Naive thymus-derived CD4-positive, alpha-beta T cell (primary cell): ENCODE measurements at regions of chr3 and their contacts with region 1.

Region 1: DNA sequence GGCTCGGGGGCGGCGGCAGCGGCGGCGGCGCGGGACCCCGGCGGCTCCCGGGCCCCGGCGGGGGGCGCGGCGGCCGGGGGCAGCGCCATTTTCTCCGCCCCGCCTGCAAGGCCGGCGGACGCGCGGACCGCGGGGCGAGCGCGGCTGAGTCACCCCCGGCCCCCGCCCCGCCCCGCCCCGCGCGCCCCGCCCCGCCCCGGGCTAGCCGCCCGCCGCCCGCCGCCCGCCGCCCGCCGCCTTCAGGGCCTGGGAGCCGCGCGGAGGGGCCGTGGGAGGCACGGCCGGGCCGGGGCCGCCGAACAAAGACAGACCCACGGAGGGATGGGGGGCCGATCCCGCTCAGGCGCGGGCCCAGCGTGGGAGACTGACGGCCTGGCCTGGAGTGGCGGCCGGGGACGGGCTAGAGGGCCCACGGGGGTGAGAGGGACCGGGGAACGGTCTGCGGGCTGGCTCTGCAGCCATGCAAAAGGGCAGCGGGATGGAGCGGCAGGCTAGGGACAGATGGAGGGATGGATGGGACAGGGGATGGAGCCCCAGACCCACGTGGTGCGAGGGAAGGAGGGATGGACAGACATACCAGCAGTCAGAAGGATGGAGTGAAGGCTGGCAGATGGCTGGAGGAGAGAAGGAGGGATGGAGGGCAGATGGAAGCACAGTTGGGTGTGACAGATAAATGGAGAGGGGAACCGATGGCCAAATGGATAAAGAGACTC is at the start of gene EIF4E3:
- DNase-seq: peak in 5 of 9 donors; percentile 14 to 72 (median 33)
- ATAC-seq: peak; percentile 61
- H3K4me3 ChIP-seq: peak within 1 kb of the TSS; percentile 81
- H3K4me3 Mint-ChIP-seq: peak within 1 kb of the TSS; percentile 85 to 99 (median 95)
- H3K27ac ChIP-seq: peak within 1 kb of the TSS; percentile 76
- H3K27ac Mint-ChIP-seq: peak within 1 kb of the TSS; percentile 84 to 98 (median 96)
- H3K4me1 ChIP-seq: peaks cover 51 to 60% of the 10 kb centered on the region in 2 donors
- H3K4me1 Mint-ChIP-seq: peaks cover 60 to 81% (median 76%) of the 10 kb centered on the region in 7 donors
- H3K27me3 ChIP-seq: no peaks in the 10 kb centered on the region
- H3K27me3 Mint-ChIP-seq: no peaks in the 10 kb centered on the region
- total RNA-seq, gene EIF4E3: 28.5 to 72.8 (median 39.2) TPM

Region 2: GRCh38 chr3:71064288-71064955 is 661.0 kb before region 1 on chr3:
- CTCF ChIA-PET with region 1: no interaction called
- POLR2A ChIA-PET with region 1: interaction called, 3 read pairs
- intact Hi-C with region 1: loop called (anchors 5 kb)
- DNase-seq: peak in 8 of 9 donors; percentile 35 to 86 (median 84)
- ATAC-seq: peak; percentile 64
- H3K4me3 ChIP-seq: peak overlapping the region; percentile 74
- H3K4me3 Mint-ChIP-seq: no peak overlapping the region
- H3K27ac ChIP-seq: peak overlapping the region; percentile 82
- H3K27ac Mint-ChIP-seq: no peak overlapping the region
- H3K4me1 ChIP-seq: peaks cover 55 to 64% of the 10 kb centered on the region in 2 donors
- H3K4me1 Mint-ChIP-seq: peaks cover 47 to 69% (median 67%) of the 10 kb centered on the region in 7 donors
- H3K27me3 ChIP-seq: no peaks in the 10 kb centered on the region
- H3K27me3 Mint-ChIP-seq: no peaks in the 10 kb centered on the region

Region 3: GRCh38 chr3:71369701-71370391 is 355.6 kb before region 1 on chr3:
- CTCF ChIA-PET with region 1: no interaction called
- POLR2A ChIA-PET with region 1: no interaction called
- intact Hi-C with region 1: no loop called
- DNase-seq: no peak
- ATAC-seq: no peak
- H3K4me3 ChIP-seq: no peak overlapping the region
- H3K4me3 Mint-ChIP-seq: peak overlapping the region in 2 of 10 donors; percentile 12 to 73
- H3K27ac ChIP-seq: peak overlapping the region; percentile 88
- H3K27ac Mint-ChIP-seq: peak overlapping the region in 8 of 9 donors; percentile 88 to 100 (median 96)
- H3K4me1 ChIP-seq: peaks cover 19 to 78% of the 10 kb centered on the region in 2 donors
- H3K4me1 Mint-ChIP-seq: peaks cover 10 to 94% (median 89%) of the 10 kb centered on the region in 7 donors
- H3K27me3 ChIP-seq: no peaks in the 10 kb centered on the region
- H3K27me3 Mint-ChIP-seq: peaks cover 0 to 39% (median 0%) of the 10 kb centered on the region in 5 donors

Region 4: GRCh38 chr3:71428841-71429596 is 296.4 kb before region 1 on chr3:
- CTCF ChIA-PET with region 1: no interaction called
- POLR2A ChIA-PET with region 1: no interaction called
- intact Hi-C with region 1: loop called in 1 of 2 experiments (anchors 10 kb)
- DNase-seq: peak in 1 of 9 donors; percentile 43
- ATAC-seq: peak; percentile 26
- H3K4me3 ChIP-seq: peak overlapping the region; percentile 23
- H3K4me3 Mint-ChIP-seq: peak overlapping the region in 9 of 10 donors; percentile 65 to 81 (median 77)
- H3K27ac ChIP-seq: peak overlapping the region; percentile 68
- H3K27ac Mint-ChIP-seq: peak overlapping the region; percentile 7 to 99 (median 95)
- H3K4me1 ChIP-seq: peaks cover 25 to 88% of the 10 kb centered on the region in 2 donors
- H3K4me1 Mint-ChIP-seq: peaks cover 55 to 100% (median 97%) of the 10 kb centered on the region in 7 donors
- H3K27me3 ChIP-seq: no peaks in the 10 kb centered on the region
- H3K27me3 Mint-ChIP-seq: peaks cover 0 to 31% (median 0%) of the 10 kb centered on the region in 5 donors

Region 5: DNA sequence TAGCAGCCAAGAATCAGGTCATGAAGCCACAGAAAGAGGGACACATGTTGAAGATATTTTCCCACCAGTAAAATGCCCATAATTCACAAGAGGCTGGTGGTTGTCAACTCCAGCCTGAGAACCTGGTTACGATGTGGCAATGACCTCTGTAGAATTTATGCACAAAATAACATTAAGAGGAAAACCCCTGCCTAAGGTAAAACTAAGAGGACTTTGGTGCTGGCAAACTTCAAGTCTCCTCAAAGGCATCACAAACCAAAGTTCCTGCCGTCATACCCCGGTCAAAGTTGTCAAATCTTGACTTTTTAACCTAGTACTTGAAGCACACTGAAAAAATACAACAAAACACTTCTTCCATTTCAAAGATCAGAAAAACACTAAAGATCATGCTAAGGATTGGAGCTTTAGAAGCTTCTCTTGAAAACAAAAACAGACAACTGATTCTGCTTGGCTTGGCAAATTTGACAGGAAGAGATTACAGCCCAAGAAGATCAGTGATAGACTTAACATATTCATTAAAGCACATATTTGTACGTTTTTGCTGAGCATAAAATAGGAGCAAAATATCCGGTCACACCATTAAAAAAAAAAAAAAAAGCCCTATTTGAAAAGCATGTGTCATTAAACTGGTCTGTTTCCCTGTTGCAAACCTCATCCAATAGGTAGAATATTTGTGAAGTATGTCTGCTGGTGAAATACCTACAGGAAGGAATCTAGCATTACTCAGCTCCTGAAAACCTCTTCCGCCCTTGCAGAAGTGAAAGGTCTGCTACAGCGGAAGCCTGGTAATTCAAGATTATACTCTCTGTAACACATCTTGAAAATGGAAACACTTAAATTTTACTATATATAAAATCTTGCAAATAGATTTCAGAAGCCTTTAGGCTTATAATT is 23.1 kb before region 1 on chr3:
- CTCF ChIA-PET with region 1: interaction called, 5 read pairs
- POLR2A ChIA-PET with region 1: interaction called, 3 read pairs
- intact Hi-C with region 1: loop called (anchors 1 kb)
- DNase-seq: peak in 7 of 9 donors; percentile 25 to 62 (median 49)
- ATAC-seq: peak; percentile 80
- H3K4me3 ChIP-seq: peak overlapping the region; percentile 3
- H3K4me3 Mint-ChIP-seq: peak overlapping the region; percentile 42 to 82 (median 68)
- H3K27ac ChIP-seq: no peak overlapping the region
- H3K27ac Mint-ChIP-seq: peak overlapping the region; percentile 64 to 97 (median 88)
- H3K4me1 ChIP-seq: peaks cover 25 to 31% of the 10 kb centered on the region in 2 donors
- H3K4me1 Mint-ChIP-seq: peaks cover 39 to 73% (median 53%) of the 10 kb centered on the region in 7 donors
- H3K27me3 ChIP-seq: no peaks in the 10 kb centered on the region
- H3K27me3 Mint-ChIP-seq: no peaks in the 10 kb centered on the region

Region 6: GRCh38 chr3:71875461-71875947 is 150.1 kb after region 1 on chr3:
- CTCF ChIA-PET with region 1: interaction called, 4 read pairs
- POLR2A ChIA-PET with region 1: no interaction called
- intact Hi-C with region 1: loop called (anchors 5 kb)
- DNase-seq: peak; percentile 55 to 81 (median 73)
- ATAC-seq: peak; percentile 98
- H3K4me3 ChIP-seq: no peak overlapping the region
- H3K4me3 Mint-ChIP-seq: no peak overlapping the region
- H3K27ac ChIP-seq: no peak overlapping the region
- H3K27ac Mint-ChIP-seq: no peak overlapping the region
- H3K4me1 ChIP-seq: no peaks in the 10 kb centered on the region
- H3K4me1 Mint-ChIP-seq: peaks cover 0 to 20% (median 10%) of the 10 kb centered on the region in 7 donors
- H3K27me3 ChIP-seq: no peaks in the 10 kb centered on the region
- H3K27me3 Mint-ChIP-seq: peaks cover 0 to 4% (median 0%) of the 10 kb centered on the region in 5 donors

Region 7: DNA sequence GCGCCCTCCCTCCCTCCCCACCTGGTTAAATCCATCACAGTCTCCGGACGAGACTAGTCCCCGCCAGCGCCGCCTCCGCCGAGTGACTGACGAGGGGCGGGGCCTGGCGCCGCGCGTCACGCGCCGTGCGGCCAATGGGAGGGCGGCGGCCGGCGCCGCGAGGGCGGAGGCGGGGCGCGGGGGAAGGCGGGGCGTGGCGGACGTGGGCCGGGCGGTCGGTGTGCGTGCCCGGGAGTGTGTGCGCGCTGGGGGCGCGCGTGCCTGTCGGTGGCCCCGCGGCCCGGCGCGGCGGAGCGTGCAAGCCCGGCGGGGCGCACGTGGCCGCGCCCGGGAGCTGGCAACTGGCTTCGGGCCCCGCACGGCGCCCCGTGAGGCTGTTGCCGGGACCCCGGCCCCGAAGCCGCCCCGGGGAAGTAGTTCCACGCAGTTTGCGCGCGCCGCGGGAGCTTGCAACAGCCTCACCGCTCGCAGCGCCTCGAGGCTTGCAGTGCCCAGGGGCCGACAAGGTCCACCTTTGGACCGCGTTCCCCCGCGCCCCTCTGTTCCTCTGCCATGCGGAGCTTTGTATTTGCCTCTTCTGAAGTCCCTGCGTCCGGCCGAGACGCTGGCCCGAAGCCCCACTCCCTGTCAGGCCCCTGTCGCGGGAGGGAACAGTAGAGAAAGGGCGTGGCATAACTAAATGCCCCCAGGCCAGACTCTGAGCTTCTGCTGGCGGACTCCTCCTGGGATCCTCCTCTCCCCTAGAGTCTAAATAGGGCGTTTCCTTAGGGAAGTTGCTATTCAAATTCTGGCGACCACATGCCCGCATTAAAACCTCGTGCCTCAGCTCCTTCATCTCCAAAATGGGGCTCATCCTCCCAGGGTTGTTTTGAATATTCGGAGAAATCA is 721.9 kb after region 1 on chr3:
- CTCF ChIA-PET with region 1: no interaction called
- POLR2A ChIA-PET with region 1: interaction called, 3 read pairs
- intact Hi-C with region 1: loop called (anchors 2 to 5 kb)
- DNase-seq: peak; percentile 86 to 98 (median 95)
- ATAC-seq: peak; percentile 99
- H3K4me3 ChIP-seq: peak overlapping the region; percentile 39
- H3K4me3 Mint-ChIP-seq: peak overlapping the region; percentile 47 to 98 (median 74)
- H3K27ac ChIP-seq: peak overlapping the region; percentile 79
- H3K27ac Mint-ChIP-seq: peak overlapping the region; percentile 25 to 83 (median 61)
- H3K4me1 ChIP-seq: peaks cover 23 to 31% of the 10 kb centered on the region in 2 donors
- H3K4me1 Mint-ChIP-seq: peaks cover 37 to 43% (median 41%) of the 10 kb centered on the region in 7 donors
- H3K27me3 ChIP-seq: no peaks in the 10 kb centered on the region
- H3K27me3 Mint-ChIP-seq: peaks cover 0 to 8% (median 6%) of the 10 kb centered on the region in 5 donors

Region 8: DNA sequence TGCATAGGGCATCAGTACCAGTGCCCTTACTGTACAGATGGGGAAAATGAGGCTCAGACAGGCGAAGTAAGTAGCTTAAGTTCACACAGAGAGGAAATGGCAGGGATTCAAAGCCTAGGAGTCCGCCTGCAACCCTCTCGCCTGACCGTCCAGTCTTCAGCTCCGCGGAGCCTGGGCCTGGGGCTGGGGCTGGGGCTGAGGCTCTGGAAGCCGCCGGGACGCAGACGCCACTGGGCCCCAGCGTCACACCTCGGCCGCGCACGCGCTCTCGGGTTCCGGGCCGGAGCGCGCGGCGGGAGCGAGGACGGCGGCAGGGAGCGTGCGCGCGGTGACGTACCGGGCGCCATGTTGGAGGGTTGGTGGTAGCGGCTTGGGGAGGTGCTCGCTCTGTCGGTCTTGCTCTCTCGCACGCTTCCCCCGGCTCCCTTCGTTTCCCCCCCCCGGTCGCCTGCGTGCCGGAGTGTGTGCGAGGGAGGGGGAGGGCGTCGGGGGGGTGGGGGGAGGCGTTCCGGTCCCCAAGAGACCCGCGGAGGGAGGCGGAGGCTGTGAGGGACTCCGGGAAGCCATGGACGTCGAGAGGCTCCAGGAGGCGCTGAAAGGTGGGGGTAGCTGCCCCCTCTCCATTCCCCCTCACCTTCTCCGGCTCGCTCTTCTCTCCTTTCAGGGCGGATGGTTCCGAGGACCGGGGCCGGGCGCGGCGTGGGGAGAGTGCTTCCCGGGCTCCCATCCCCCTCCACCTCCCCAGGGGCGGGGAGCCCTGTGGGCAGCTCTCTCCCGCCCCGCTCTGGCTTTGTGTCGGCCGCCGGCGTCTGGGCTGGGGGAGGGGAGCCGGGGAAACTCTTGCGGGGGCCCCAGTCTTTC is 1271.3 kb after region 1 on chr3 and contains the start of gene PPP4R2:
- CTCF ChIA-PET with region 1: no interaction called
- POLR2A ChIA-PET with region 1: interaction called, 3 read pairs
- intact Hi-C with region 1: loop called (anchors 2 kb)
- DNase-seq: peak; percentile 90 to 96 (median 94)
- ATAC-seq: peak; percentile 94
- H3K4me3 ChIP-seq: peak within 1 kb of the TSS; percentile 76
- H3K4me3 Mint-ChIP-seq: peak within 1 kb of the TSS; percentile 84 to 95 (median 92)
- H3K27ac ChIP-seq: peak within 1 kb of the TSS; percentile 97
- H3K27ac Mint-ChIP-seq: peak within 1 kb of the TSS; percentile 69 to 97 (median 88)
- H3K4me1 ChIP-seq: peaks cover 26 to 36% of the 10 kb centered on the region in 2 donors
- H3K4me1 Mint-ChIP-seq: peaks cover 30 to 51% (median 44%) of the 10 kb centered on the region in 7 donors
- H3K27me3 ChIP-seq: no peaks in the 10 kb centered on the region
- H3K27me3 Mint-ChIP-seq: no peaks in the 10 kb centered on the region
- total RNA-seq, gene PPP4R2: 56.3 to 87.0 (median 63.8) TPM